ENCODE measurements at regions of chr20 and their contacts with region 1.

Region 1: GRCh38 chr20:59508729-59509128 is 95.6 kb upstream of the PHACTR3 start:
- DNase-seq: no peak
- H3K4me3 Mint-ChIP-seq: no peak overlapping the region
- H3K27ac Mint-ChIP-seq: no peak overlapping the region
- H3K4me1 Mint-ChIP-seq: no peaks in the 10 kb centered on the region
- H3K27me3 Mint-ChIP-seq: peaks cover 13% of the 10 kb centered on the region

Region 2: DNA sequence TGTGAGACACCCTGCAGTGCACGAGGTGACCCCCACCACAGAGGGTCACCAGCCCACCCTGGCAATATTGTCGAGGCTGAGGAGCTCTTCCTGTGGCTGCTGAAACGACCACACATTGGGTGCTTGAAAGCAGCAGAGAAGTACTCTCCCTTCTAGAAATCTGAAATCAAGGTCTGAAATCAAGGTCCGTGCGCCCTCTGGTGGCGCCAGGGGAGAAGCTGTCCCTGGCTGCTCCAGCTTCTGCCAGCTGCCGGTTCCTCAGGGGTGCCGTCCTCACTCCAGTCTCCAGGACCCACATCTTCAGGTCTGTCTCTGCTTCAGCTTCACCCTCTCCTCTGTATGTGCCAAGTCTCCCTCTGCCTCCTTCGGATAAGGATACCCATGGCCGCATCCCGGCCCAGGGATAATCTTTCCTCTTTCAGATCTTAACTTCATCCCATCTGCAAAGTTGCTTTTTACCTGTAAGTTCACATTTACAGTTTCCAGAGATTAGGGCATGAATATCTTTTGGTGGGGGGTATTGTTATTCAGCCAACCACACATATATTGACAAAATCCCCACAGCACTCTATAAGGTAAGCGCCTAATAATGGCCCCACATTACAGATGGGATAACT is 12.7 kb before region 1 on chr20:
- CTCF ChIA-PET with region 1: interaction called, 13 read pairs
- POLR2A ChIA-PET with region 1: no interaction called
- DNase-seq: peak; percentile 73
- H3K4me3 Mint-ChIP-seq: no peak overlapping the region
- H3K27ac Mint-ChIP-seq: no peak overlapping the region
- H3K4me1 Mint-ChIP-seq: no peaks in the 10 kb centered on the region
- H3K27me3 Mint-ChIP-seq: peaks cover 18% of the 10 kb centered on the region